A673 (cell line): ENCODE measurements at regions of chr20 and their contacts with region 1.

Region 1: GRCh38 chr20:25470045-25470444 is 62.6 kb downstream of the GINS1 start:
- DNase-seq: peak; percentile 35
- H3K4me3 ChIP-seq: no peak overlapping the region
- H3K27ac ChIP-seq: no peak overlapping the region
- H3K4me1 ChIP-seq: no peaks in the 10 kb centered on the region
- H3K27me3 ChIP-seq: no peaks in the 10 kb centered on the region
- CTCF ChIP-seq: peak; percentile 53

Region 2: DNA sequence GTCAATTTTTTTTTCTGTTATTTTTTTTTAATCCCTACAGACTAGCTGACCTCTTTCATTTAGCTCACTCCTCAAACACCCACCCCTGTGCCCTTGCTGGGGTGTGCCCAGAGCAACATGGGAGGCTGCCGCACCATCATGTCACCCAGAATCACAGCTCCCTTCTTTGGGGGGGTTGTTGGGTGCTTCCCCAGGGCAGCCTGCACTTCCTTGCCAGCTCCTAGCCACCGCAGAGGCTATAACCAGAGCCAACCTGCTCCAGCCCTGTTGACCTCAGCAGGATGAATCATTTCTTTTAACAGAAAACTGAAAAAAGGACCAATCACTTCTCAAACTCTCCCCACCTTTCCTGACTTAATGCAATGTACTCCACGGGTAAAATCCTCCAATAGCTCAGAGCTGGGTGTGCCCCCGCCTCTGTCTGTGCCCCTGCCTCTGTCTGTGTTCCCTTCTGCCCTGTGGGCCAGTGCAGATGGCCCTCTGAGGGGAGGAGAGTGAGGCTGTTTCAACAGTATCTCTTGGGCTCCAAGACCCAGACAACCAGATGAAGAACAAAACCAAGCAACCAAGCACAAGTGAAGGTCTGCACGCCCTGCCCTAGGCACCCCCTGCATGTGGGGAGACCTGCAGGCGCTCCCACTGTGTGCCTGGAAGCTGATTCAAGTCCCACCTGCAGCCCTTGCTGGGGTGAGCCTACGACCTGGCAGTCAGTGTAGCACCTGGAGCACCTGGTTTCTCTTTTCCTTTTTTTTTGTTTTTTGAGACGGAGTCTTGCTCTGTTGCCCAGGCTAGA is 154.4 kb before region 1 on chr20:
- CTCF ChIA-PET with region 1: no interaction called
- POLR2A ChIA-PET with region 1: no interaction called
- intact Hi-C with region 1: no loop called
- DNase-seq: no peak
- H3K4me3 ChIP-seq: no peak overlapping the region
- H3K27ac ChIP-seq: no peak overlapping the region
- H3K4me1 ChIP-seq: no peaks in the 10 kb centered on the region
- H3K27me3 ChIP-seq: no peaks in the 10 kb centered on the region
- CTCF ChIP-seq: no peak

Region 3: DNA sequence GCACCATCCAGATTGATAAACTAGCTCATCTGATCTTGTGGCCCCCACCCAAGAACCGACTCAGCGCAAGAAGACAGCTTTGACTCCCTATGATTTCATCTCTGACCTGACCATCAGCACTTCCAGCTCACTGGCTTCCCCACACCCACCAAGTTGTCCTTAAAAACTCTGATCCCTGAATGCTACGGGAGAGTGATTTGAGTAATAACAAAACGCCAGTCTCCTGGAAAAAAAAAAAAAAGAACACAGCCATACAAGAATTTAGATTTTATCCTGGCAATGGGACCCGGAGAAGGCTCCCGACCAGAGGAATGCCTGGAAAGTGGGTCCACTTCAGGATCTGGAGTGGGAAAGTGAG is 142.2 kb before region 1 on chr20:
- CTCF ChIA-PET with region 1: interaction called, 10 read pairs
- POLR2A ChIA-PET with region 1: no interaction called
- intact Hi-C with region 1: no loop called
- DNase-seq: no peak
- H3K4me3 ChIP-seq: no peak overlapping the region
- H3K27ac ChIP-seq: no peak overlapping the region
- H3K4me1 ChIP-seq: no peaks in the 10 kb centered on the region
- H3K27me3 ChIP-seq: no peaks in the 10 kb centered on the region
- CTCF ChIP-seq: no peak